ENCODE measurements at regions of chr7 and their contacts with region 1.

Region 1: GRCh38 chr7:149090397-149091195 is at the start of gene ZNF786:
- DNase-seq: peak; percentile 93
- H3K4me3 Mint-ChIP-seq: peak within 1 kb of the TSS; percentile 98
- H3K27ac Mint-ChIP-seq: peak within 1 kb of the TSS; percentile 94
- H3K4me1 Mint-ChIP-seq: peaks cover 20% of the 10 kb centered on the region
- H3K27me3 Mint-ChIP-seq: no peaks in the 10 kb centered on the region
- CTCF ChIP-seq: peak; percentile 79
- total RNA-seq, gene ZNF786: 9.8 and 10.9 TPM in 2 replicates

Region 2: DNA sequence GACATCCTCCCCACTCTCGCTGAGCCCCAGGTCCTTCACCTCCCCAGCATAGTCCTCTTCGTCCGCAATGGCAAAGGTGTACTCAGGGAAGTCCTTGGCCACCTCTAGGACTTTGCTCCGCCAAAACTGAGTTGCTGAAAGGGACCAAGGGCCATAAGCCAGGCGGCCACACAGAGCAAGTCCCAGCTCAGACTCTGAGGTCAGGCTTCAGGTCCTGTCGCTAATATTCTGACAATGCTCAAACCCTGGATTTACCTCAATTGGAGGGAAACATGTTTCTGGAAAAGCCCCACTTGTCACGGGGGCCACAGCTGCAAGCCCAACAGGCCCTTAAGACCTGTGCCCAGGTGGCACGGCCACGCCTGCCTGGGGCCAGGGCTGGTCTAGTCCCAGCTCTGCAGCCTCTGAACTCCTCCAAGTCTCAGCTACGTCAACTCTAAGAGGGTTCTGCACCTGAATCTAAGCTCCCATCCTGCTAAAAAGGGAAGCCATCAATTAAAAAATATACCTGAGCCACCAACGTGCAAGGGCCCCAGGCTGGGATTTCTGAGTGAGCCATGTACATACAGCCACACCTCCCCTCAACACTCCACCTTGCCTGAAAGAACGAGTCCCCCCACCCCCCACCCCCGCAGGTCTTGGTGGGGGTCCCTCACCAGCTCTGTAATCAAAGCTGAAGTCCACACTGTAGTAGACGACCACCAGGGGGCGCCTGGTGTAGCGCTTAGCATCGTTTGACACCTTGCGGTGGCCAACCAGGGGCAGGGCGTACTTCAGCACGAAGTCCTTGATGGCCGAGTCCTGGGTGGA is 85.2 kb before region 1 on chr7:
- CTCF ChIA-PET with region 1: no interaction called
- intact Hi-C with region 1: loop called (anchors 1 kb)
- DNase-seq: peak; percentile 78
- H3K4me3 Mint-ChIP-seq: no peak overlapping the region
- H3K27ac Mint-ChIP-seq: peak overlapping the region; percentile 23
- H3K4me1 Mint-ChIP-seq: peaks cover 8% of the 10 kb centered on the region
- H3K27me3 Mint-ChIP-seq: no peaks in the 10 kb centered on the region
- CTCF ChIP-seq: peak; percentile 87

Region 3: GRCh38 chr7:149284850-149285626 is 194.4 kb after region 1 on chr7:
- CTCF ChIA-PET with region 1: no interaction called
- intact Hi-C with region 1: no loop called
- DNase-seq: peak; percentile 99
- H3K4me3 Mint-ChIP-seq: peak overlapping the region; percentile 92
- H3K27ac Mint-ChIP-seq: peak overlapping the region; percentile 84
- H3K4me1 Mint-ChIP-seq: peaks cover 13% of the 10 kb centered on the region
- H3K27me3 Mint-ChIP-seq: no peaks in the 10 kb centered on the region
- CTCF ChIP-seq: no peak

Region 4: GRCh38 chr7:149330914-149331567 is 240.4 kb after region 1 on chr7:
- CTCF ChIA-PET with region 1: no interaction called
- intact Hi-C with region 1: no loop called
- DNase-seq: no peak
- H3K4me3 Mint-ChIP-seq: no peak overlapping the region
- H3K27ac Mint-ChIP-seq: no peak overlapping the region
- H3K4me1 Mint-ChIP-seq: no peaks in the 10 kb centered on the region
- H3K27me3 Mint-ChIP-seq: peaks cover 62% of the 10 kb centered on the region
- CTCF ChIP-seq: no peak

Measured in Calu3 (cell line).